Vagina (tissue), 2 donors: ENCODE measurements at regions of chr9 and their contacts with region 1.

Region 1: DNA sequence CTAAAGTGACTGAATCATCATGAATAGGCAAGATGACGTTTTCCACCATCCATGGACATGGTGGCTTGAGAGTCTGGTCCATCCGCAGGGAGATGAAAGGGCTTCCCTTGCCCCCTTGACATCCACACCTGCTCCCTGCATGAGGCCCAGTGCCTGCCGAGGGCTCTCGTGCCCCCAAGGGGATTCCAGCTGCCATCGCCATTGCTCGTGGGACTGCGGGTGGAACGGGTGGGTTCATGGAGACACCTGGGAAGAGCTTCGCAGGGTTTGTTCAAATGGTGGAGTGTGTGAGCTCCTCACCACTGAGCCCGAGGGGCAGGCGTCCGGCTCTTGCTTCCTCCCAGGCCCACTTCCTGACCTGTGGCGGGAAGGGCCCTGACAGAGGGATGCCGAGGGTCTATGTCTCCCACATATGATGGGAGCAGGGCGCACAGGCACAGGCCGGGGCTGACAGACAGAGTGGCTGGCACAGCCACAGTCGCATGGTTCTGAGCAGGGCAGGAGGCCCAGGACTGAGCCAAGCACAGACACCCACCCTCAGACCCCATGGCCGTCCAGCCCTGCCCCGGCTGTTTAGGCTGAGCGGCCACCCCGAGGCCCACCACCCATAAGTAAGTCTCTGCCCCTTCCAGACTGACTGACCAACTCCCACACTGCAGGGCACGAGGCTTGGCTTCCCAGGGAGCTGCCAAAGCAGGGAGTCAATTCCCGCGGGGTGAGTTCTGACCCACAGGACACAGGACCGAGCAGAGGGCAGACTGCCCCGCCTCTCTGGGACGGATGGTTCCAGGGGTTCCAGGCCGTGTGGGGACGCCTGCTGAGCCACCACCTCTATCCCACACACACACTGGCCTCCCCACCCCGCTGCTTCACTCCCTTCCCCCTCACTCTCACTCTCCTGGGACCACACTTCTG is 70.0 kb upstream of the PPP1R26 start:
- DNase-seq: no peak
- H3K4me3 ChIP-seq: no peak overlapping the region
- H3K27ac ChIP-seq: no peak overlapping the region
- H3K4me1 ChIP-seq: peaks cover 6% of the 10 kb centered on the region
- H3K27me3 ChIP-seq: no peaks in the 10 kb centered on the region
- CTCF ChIP-seq: no peak
- POLR2A ChIP-seq: no peak

Region 2: DNA sequence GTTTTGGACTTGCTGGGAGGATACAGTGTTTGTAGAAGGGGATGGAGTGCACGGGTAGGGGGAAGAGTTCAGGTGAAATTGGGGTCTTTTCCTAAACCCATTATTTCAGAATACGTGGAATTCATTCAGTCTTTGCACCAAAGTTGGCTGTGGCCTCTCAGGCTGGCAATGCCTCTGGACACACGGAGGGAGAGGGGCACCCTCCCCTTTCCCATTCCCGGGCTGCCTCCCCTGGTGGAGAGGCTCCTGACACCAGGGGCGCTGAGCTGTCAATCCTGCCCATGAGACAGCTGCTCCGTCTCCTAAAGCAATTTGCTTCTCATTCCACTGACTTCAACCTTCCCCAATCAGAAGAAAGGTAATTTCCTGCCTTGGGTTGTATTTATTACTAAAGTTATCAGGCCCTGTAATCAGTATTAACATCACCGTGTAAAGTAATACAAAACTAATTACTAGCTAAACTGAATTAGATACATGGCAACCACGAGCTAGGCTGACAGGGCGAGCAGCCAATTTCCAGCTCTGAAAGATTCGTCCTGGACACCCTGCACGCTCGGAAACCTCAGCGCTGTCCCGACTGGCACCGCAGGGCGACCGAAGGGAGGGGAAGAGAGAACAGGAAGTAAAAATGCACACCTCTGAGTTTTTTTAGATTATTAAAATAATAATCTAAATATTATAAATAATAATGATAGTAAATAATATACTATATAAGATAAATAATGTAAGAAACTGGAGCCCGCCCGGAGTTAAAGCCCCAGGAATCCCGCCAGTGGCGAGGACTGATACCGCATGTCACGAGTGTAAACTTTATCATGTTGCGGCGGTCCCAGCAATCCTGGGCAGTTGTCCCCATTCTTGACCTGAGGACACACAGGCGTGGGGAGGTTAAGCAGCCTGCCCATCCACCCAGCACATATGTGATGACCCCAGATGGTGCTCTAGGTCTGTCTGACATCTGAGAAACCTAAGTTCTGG is 329.0 kb before region 1 on chr9:
- intact Hi-C with region 1: loop called (anchors 5 kb)
- DNase-seq: no peak
- H3K4me3 ChIP-seq: no peak overlapping the region
- H3K27ac ChIP-seq: no peak overlapping the region
- H3K4me1 ChIP-seq: peaks cover 19% of the 10 kb centered on the region
- H3K27me3 ChIP-seq: no peaks in the 10 kb centered on the region
- CTCF ChIP-seq: no peak
- POLR2A ChIP-seq: no peak

Region 3: GRCh38 chr9:135365013-135365768 is 44.4 kb before region 1 on chr9:
- intact Hi-C with region 1: loop called (anchors 1 kb)
- DNase-seq: no peak
- H3K4me3 ChIP-seq: no peak overlapping the region
- H3K27ac ChIP-seq: no peak overlapping the region
- H3K4me1 ChIP-seq: no peaks in the 10 kb centered on the region
- H3K27me3 ChIP-seq: no peaks in the 10 kb centered on the region
- CTCF ChIP-seq: no peak
- POLR2A ChIP-seq: no peak